CD4-positive, alpha-beta T cell (primary cell): ENCODE measurements at regions of chr12 and their contacts with region 1.

Region 1: DNA sequence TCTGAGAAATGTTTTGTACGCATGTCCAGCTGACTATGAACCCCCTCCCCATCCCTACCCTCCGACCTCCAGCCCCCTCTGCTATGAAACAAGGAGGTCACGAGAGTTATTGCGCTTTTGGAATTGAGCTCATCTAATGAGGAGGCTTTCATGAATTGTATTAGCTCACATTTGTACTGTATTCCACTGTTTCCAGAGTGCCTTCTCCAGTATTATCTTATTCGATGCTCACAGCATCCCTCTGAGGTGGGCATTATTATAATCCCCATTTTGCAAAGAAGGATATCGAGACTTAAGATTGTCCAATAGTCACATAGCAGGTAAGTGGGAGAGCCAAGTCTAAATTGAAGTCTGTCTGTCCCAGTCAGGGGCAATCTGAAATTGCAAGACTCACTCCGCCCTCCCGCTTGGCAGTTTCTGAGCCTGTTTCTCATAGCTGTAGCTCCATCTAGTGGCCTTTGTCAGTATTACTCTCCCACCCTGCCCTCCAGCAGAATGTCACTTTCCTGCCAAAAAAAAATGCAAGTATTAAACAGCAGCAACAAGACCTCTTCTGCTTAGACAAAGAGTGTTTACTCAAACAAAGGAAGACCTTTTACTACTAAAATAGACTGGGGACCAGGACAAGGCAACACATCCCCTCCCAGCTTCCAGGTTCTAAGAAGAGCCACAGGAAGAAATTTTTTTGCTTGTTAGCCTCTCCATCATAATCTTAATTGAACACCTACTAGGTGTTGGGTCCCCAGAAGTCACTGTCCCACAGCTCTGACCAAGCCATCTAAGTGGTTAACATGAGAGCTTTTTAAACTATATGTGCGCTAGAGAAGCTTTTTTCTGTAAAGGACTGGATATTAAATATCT is 48.6 kb upstream of the TMEM233 start:
- DNase-seq: peak; percentile 23 to 72 (median 36)
- ATAC-seq: peak; percentile 39
- H3K4me3 ChIP-seq: no peak overlapping the region
- H3K4me3 Mint-ChIP-seq: no peak overlapping the region
- H3K27ac ChIP-seq: no peak overlapping the region
- H3K27ac Mint-ChIP-seq: no peak overlapping the region
- H3K4me1 ChIP-seq: no peaks in the 10 kb centered on the region
- H3K4me1 Mint-ChIP-seq: no peaks in the 10 kb centered on the region
- H3K27me3 ChIP-seq: peaks cover 2 to 12% of the 10 kb centered on the region in 2 experiments
- H3K27me3 Mint-ChIP-seq: peaks cover 69% of the 10 kb centered on the region
- CTCF ChIP-seq: peak; percentile 79

Region 2: GRCh38 chr12:117874842-117875434 is 1670.1 kb before region 1 on chr12:
- CTCF ChIA-PET with region 1: no interaction called
- POLR2A ChIA-PET with region 1: no interaction called
- intact Hi-C with region 1: loop called (anchors 10 kb)
- DNase-seq: peak; percentile 41 to 76 (median 51)
- ATAC-seq: peak; percentile 59
- H3K4me3 ChIP-seq: no peak overlapping the region
- H3K4me3 Mint-ChIP-seq: no peak overlapping the region
- H3K27ac ChIP-seq: peak overlapping the region in 1 of 2 donors; percentile 35
- H3K27ac Mint-ChIP-seq: peak overlapping the region; percentile 43
- H3K4me1 ChIP-seq: peaks cover 16% of the 10 kb centered on the region
- H3K4me1 Mint-ChIP-seq: peaks cover 6% of the 10 kb centered on the region
- H3K27me3 ChIP-seq: peaks cover 7 to 14% of the 10 kb centered on the region in 2 experiments
- H3K27me3 Mint-ChIP-seq: peaks cover 30% of the 10 kb centered on the region
- CTCF ChIP-seq: peak; percentile 80

Region 3: DNA sequence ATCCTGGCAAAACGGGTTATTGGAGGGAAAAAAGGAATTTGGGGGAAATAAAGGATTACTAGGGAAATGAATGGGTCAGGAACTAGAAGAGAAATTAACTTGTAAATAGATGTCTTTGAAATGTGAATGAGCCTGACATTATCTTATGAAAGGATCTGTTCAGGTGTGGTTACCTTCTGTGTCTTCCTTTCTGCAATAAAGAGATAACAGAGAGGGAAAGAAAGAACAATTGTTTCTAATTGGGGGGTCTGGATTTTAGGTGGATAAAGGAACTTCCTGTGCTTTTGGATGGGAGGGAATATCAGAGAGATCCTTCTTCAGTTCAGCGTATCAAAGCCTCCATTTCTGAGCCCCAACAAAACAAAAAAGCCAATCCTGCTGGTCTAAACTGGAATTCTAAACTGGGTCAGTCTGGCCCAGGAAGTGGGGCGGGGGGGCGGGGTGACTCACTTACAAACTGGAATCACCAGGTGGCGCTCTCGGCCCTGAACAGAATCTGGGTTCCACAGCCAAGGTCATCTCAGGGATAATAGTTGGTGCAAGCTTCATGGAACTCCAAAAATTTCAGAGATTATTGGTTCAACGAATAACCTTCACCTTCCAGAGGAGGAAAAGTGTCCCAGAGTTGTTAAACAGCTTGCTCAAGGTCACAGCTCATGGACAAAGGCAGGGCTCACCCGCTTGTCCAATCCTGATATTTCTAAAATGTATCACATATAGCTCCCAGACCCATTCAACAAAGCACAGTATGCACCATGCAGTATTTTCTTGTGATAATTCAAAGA is 1424.2 kb before region 1 on chr12:
- CTCF ChIA-PET with region 1: no interaction called
- POLR2A ChIA-PET with region 1: no interaction called
- intact Hi-C with region 1: loop called in 1 of 2 experiments (anchors 5 kb)
- DNase-seq: peak; percentile 35 to 81 (median 54)
- ATAC-seq: peak; percentile 67
- H3K4me3 ChIP-seq: no peak overlapping the region
- H3K4me3 Mint-ChIP-seq: no peak overlapping the region
- H3K27ac ChIP-seq: peak overlapping the region in 1 of 2 donors; percentile 6
- H3K27ac Mint-ChIP-seq: peak overlapping the region; percentile 62
- H3K4me1 ChIP-seq: peaks cover 6% of the 10 kb centered on the region
- H3K4me1 Mint-ChIP-seq: peaks cover 11% of the 10 kb centered on the region
- H3K27me3 ChIP-seq: no peaks in the 10 kb centered on the region
- H3K27me3 Mint-ChIP-seq: no peaks in the 10 kb centered on the region
- CTCF ChIP-seq: peak; percentile 82

Region 4: DNA sequence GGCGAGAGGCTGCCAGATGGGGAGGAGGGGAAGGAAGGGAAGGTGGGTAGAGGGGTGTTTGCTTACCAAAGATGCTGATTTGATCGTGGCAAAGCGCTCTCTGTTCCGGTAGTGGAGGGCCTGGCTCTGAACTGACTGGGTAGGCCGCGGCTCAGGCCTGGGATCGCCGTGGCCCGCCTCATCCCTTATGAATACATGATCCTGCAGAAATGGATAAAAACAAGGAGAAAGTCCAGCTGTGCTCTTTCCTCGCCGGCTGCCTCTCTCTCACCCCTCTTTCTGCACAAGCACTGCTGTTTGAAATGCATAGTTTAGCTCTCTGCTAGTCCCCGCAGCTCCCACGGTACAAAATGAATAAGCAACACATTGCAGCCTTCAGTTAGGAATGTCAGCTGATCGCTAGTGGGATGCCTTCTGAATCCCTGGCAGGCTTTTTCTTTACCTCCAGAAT is 1355.2 kb before region 1 on chr12:
- CTCF ChIA-PET with region 1: no interaction called
- POLR2A ChIA-PET with region 1: no interaction called
- intact Hi-C with region 1: loop called in 1 of 2 experiments (anchors 10 kb)
- DNase-seq: no peak
- ATAC-seq: no peak
- H3K4me3 ChIP-seq: no peak overlapping the region
- H3K4me3 Mint-ChIP-seq: no peak overlapping the region
- H3K27ac ChIP-seq: no peak overlapping the region
- H3K27ac Mint-ChIP-seq: no peak overlapping the region
- H3K4me1 ChIP-seq: no peaks in the 10 kb centered on the region
- H3K4me1 Mint-ChIP-seq: peaks cover 22% of the 10 kb centered on the region
- H3K27me3 ChIP-seq: no peaks in the 10 kb centered on the region
- H3K27me3 Mint-ChIP-seq: no peaks in the 10 kb centered on the region
- CTCF ChIP-seq: no peak

Region 5: GRCh38 chr12:118404876-118405521 is 1140.0 kb before region 1 on chr12:
- CTCF ChIA-PET with region 1: interaction called, 4 read pairs
- POLR2A ChIA-PET with region 1: no interaction called
- intact Hi-C with region 1: loop called in 1 of 2 experiments (anchors 2 kb)
- DNase-seq: peak; percentile 14 to 64 (median 36)
- ATAC-seq: peak; percentile 61
- H3K4me3 ChIP-seq: no peak overlapping the region
- H3K4me3 Mint-ChIP-seq: no peak overlapping the region
- H3K27ac ChIP-seq: no peak overlapping the region
- H3K27ac Mint-ChIP-seq: no peak overlapping the region
- H3K4me1 ChIP-seq: no peaks in the 10 kb centered on the region
- H3K4me1 Mint-ChIP-seq: no peaks in the 10 kb centered on the region
- H3K27me3 ChIP-seq: no peaks in the 10 kb centered on the region
- H3K27me3 Mint-ChIP-seq: no peaks in the 10 kb centered on the region
- CTCF ChIP-seq: peak; percentile 84

Region 6: GRCh38 chr12:119115296-119115905 is 429.6 kb before region 1 on chr12:
- CTCF ChIA-PET with region 1: no interaction called
- POLR2A ChIA-PET with region 1: no interaction called
- intact Hi-C with region 1: loop called in 1 of 2 experiments (anchors 10 kb)
- DNase-seq: peak in 4 of 14 experiments; percentile 11 to 37 (median 28)
- ATAC-seq: no peak
- H3K4me3 ChIP-seq: no peak overlapping the region
- H3K4me3 Mint-ChIP-seq: no peak overlapping the region
- H3K27ac ChIP-seq: no peak overlapping the region
- H3K27ac Mint-ChIP-seq: no peak overlapping the region
- H3K4me1 ChIP-seq: no peaks in the 10 kb centered on the region
- H3K4me1 Mint-ChIP-seq: no peaks in the 10 kb centered on the region
- H3K27me3 ChIP-seq: no peaks in the 10 kb centered on the region
- H3K27me3 Mint-ChIP-seq: peaks cover 12% of the 10 kb centered on the region
- CTCF ChIP-seq: peak; percentile 79